Activated CD4-positive, alpha-beta T cell treated with anti-CD3 and anti-CD28 coated beads for 36 hours (primary cell): ENCODE measurements at regions of chr1 and their contacts with region 1.

Region 1: DNA sequence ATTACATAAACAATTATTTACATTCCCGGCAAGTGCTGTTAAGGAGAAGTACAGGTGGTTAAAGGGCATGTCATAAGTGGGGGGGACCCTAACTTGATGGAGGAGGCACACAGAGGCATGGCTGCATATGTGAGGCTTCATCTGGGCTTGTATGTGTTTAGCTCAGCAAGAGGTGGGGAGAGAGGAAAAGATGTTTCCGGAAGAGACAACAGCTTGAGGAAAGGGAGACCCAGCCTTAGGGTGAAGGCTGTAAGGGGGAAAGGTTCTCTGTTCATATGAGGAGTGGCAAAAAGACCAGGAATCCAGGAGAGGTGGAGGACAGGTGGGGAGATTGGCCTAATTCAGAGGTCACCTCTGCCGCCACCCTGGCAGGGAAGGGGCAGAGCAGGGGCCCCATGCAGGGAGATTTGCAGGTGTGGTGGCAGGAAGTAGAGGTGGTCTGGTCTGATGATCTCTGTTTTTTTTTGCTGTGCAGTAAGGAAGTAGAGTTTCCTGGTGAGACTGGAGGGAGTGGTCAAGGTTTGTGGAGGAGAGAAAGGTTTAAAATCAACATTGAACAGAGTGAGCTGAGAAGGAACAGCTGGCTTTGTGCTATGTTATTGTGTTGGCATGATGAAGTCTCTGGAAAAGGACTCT is 9.0 kb downstream of the TRAF5 start:
- DNase-seq: no peak
- ATAC-seq: peak; percentile 28
- H3K4me3 Mint-ChIP-seq: peak overlapping the region; percentile 45
- H3K27ac Mint-ChIP-seq: peak overlapping the region; percentile 90
- H3K4me1 Mint-ChIP-seq: peaks cover 89% of the 10 kb centered on the region
- H3K27me3 Mint-ChIP-seq: no peaks in the 10 kb centered on the region

Region 2: GRCh38 chr1:211118407-211119102 is 217.1 kb before region 1 on chr1:
- CTCF ChIA-PET with region 1: no interaction called
- POLR2A ChIA-PET with region 1: no interaction called
- intact Hi-C with region 1: no loop called
- DNase-seq: no peak
- ATAC-seq: no peak
- H3K4me3 Mint-ChIP-seq: no peak overlapping the region
- H3K27ac Mint-ChIP-seq: no peak overlapping the region
- H3K4me1 Mint-ChIP-seq: no peaks in the 10 kb centered on the region
- H3K27me3 Mint-ChIP-seq: peaks cover 28% of the 10 kb centered on the region

Region 3: DNA sequence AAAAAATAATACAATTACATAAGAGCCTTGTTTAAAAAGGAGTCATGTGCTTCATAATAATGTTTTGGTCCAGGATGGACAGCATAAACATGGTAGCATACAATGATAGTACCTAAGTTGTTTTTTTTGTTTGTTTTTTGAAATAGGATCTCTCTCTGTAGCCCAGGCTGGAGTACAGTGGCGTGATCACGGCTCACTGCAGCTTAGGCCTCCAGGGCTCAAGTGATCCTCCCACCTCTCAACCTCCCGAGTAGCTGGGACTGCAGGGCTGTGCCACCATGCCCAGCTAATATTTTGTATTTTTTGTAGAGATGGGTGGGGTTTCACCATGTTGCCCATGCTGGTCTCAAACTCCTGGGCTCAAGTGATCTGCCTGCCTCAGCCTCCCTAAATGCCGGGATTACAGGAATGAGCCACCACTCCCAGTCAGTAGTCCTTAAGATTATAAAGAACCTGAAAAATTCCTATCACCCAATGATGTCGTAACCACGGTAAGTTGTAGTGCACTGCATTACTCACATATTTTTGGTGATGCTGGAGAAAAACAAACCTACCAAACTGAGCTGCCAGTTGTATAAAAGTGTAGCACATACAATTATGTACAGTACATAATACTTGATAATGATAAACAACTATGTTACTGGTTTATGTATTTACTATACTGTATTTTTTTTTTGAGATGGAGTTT is 98.9 kb before region 1 on chr1:
- CTCF ChIA-PET with region 1: no interaction called
- POLR2A ChIA-PET with region 1: no interaction called
- intact Hi-C with region 1: no loop called
- DNase-seq: no peak
- ATAC-seq: no peak
- H3K4me3 Mint-ChIP-seq: no peak overlapping the region
- H3K27ac Mint-ChIP-seq: no peak overlapping the region
- H3K4me1 Mint-ChIP-seq: no peaks in the 10 kb centered on the region
- H3K27me3 Mint-ChIP-seq: peaks cover 3% of the 10 kb centered on the region

Region 4: GRCh38 chr1:211345719-211346118 is 10.1 kb after region 1 on chr1:
- CTCF ChIA-PET with region 1: interaction called, 10 read pairs
- POLR2A ChIA-PET with region 1: no interaction called
- intact Hi-C with region 1: no loop called
- DNase-seq: no peak
- ATAC-seq: no peak
- H3K4me3 Mint-ChIP-seq: no peak overlapping the region
- H3K27ac Mint-ChIP-seq: peak overlapping the region; percentile 57
- H3K4me1 Mint-ChIP-seq: peaks cover 85% of the 10 kb centered on the region
- H3K27me3 Mint-ChIP-seq: no peaks in the 10 kb centered on the region

Region 5: GRCh38 chr1:211352985-211353515 is 17.4 kb after region 1 on chr1:
- CTCF ChIA-PET with region 1: interaction called, 7 read pairs
- POLR2A ChIA-PET with region 1: interaction called, 3 read pairs
- intact Hi-C with region 1: loop called in 1 of 2 experiments (anchors 2 kb)
- DNase-seq: peak; percentile 73
- ATAC-seq: peak; percentile 75
- H3K4me3 Mint-ChIP-seq: peak overlapping the region; percentile 28
- H3K27ac Mint-ChIP-seq: peak overlapping the region; percentile 88
- H3K4me1 Mint-ChIP-seq: peaks cover 81% of the 10 kb centered on the region
- H3K27me3 Mint-ChIP-seq: no peaks in the 10 kb centered on the region